AG04449 (cell line): ENCODE measurements at regions of chr2 and their contacts with region 1.

Region 1: DNA sequence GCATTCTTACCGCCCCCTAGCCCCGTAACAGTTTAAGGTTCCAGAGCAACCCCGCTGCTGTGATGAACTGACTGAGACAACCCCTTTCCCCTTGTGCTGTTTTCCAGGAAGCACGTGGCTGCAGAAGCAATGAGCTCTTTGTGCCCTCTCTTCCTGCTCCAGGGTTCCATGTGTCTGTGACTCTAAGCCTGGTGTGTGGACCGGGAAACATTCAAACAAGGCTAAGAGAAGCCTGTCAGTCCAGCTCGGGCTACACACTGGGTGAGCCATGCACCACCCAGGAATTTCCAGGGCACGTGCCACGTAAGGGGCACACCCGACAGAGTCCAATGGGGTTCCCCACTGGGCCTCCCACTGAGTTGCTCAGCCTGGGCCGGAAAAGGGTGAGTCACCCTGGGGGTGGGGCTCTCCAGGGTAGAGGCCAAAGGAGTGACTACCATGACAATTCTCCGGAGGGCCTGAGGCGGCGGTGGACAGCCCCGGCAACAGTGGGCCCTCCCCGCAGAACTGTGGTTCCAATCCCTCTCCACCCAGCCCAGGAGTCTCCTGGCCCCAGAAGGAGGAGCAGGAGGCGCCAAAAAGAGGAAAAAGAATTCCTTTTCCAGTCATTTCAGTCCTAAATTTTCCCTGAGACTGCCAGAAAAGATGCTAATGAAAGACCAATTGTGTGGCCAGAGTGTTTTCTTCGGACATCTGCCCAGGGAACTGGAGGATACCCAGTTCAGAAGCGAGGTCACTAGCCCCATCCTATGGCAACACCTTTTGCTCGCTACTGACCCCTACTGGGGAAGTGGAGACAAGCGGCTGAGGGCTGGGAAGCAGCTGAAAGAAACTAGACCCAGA is 157.8 kb upstream of the SLC1A4 start:
- DNase-seq: peak; percentile 65
- H3K4me3 ChIP-seq: no peak overlapping the region
- CTCF ChIP-seq: peak; percentile 77

Region 2: GRCh38 chr2:64807417-64807816 is 23.9 kb before region 1 on chr2:
- CTCF ChIA-PET with region 1: interaction called, 28 read pairs
- POLR2A ChIA-PET with region 1: no interaction called
- DNase-seq: peak; percentile 99
- H3K4me3 ChIP-seq: no peak overlapping the region
- CTCF ChIP-seq: peak; percentile 25

Region 3: GRCh38 chr2:64852771-64853705 is 21.7 kb after region 1 on chr2:
- CTCF ChIA-PET with region 1: interaction called, 11 read pairs
- POLR2A ChIA-PET with region 1: no interaction called
- DNase-seq: no peak
- H3K4me3 ChIP-seq: no peak overlapping the region
- CTCF ChIP-seq: no peak

Region 4: GRCh38 chr2:64978514-64979268 is 147.3 kb after region 1 on chr2:
- CTCF ChIA-PET with region 1: no interaction called
- POLR2A ChIA-PET with region 1: no interaction called
- DNase-seq: no peak
- H3K4me3 ChIP-seq: no peak overlapping the region
- CTCF ChIP-seq: no peak

Region 5: DNA sequence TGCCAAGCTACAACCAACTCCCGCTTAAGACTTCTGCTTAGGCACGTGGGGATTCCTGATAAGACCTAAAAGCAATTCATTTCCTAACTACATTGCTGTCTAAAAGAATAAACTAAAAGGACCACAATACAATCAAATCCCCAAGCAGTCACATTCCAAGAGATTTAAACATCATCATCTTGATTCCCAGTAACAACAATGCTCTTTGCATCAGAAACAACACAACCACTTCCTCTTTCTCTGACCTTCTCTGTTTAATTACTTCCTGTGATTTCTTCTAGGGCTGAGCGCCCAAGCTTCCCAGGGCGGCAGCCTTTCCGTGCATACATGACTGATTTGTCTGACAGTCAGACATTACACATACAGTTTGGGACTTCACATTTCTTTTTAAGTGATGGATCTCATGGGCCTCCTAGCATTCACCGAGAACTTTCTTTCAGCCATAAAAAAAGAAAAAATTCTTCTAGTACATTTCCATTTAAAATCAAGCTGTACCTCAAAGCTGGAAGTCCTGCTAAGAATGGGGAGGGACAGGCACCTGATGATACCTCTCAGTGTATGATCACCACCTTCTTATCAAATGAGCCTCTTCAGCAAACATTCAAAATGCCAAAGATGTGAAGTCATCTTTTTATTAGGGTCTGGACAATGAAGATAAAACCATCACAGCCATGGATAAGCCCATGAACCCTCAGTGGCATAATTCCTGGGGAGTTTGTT is 589.5 kb after region 1 on chr2:
- CTCF ChIA-PET with region 1: no interaction called
- POLR2A ChIA-PET with region 1: no interaction called
- DNase-seq: no peak
- H3K4me3 ChIP-seq: no peak overlapping the region
- CTCF ChIP-seq: no peak